HCT116 (cell line): ENCODE measurements at regions of chrX and their contacts with region 1.

Region 1: GRCh38 chrX:112043997-112044396 is 38.6 kb downstream of the TRPC5 start:
- DNase-seq: peak; percentile 12
- ATAC-seq: no peak
- H3K4me3 ChIP-seq: no peak overlapping the region
- H3K27ac ChIP-seq: no peak overlapping the region
- H3K4me1 ChIP-seq: no peaks in the 10 kb centered on the region
- H3K27me3 ChIP-seq: 0 out of 2 replicates have a peak, but pooled peaks cover 3% of the 10 kb centered on the region
- CTCF ChIP-seq: peak in 2 of 3 experiments; percentile 24 to 30; a peak in 4 of 6 replicates
- POLR2A ChIP-seq: no peak
- RAD21 ChIP-seq: peak; percentile 50

Region 2: DNA sequence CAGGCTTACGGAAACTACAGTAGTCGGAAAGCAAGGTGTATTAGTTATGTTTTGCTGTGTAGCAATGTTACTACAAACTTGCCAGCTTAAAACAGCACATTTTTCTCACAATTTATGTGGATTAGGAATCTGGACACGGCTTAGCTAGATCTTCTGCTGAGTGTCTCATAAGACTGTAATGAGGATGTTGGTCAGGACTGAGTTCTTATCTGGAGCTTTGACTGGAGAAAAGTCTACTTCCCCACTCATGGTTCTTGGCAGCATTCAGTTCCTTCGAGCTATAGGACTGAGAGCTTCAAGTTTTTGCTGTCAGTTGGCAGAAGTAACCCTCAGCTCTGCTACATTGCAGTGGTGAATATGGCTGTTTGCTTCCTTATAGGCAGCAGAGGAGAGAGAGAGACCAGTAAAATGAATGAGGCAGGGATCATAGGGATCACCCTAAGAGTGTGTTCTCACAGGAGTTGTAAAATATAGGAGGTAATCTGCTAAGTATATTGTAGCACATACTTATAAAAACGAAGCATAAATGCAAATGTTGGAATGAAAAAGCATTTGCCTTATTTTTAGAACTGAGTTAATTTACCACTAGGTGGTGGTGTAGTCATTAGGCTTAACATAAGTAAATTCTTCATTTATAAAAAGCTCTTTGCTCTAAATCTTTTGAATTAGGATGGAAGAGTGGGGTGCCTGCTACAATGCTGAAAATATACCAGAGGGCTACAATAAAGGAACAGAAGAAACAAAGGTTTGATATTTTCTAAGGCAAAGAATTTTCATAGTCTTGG is 324.4 kb before region 1 on chrX:
- CTCF ChIA-PET with region 1: no interaction called
- POLR2A ChIA-PET with region 1: no interaction called
- RAD21 ChIA-PET with region 1: no interaction called
- intact Hi-C with region 1: loop called (anchors 5 kb)
- DNase-seq: no peak
- ATAC-seq: no peak
- H3K4me3 ChIP-seq: no peak overlapping the region
- H3K27ac ChIP-seq: no peak overlapping the region
- H3K4me1 ChIP-seq: no peaks in the 10 kb centered on the region
- H3K27me3 ChIP-seq: no peaks in the 10 kb centered on the region
- CTCF ChIP-seq: peak in 1 of 3 experiments; percentile 34; a peak in 1 of 6 replicates
- POLR2A ChIP-seq: no peak
- RAD21 ChIP-seq: no peak

Region 3: DNA sequence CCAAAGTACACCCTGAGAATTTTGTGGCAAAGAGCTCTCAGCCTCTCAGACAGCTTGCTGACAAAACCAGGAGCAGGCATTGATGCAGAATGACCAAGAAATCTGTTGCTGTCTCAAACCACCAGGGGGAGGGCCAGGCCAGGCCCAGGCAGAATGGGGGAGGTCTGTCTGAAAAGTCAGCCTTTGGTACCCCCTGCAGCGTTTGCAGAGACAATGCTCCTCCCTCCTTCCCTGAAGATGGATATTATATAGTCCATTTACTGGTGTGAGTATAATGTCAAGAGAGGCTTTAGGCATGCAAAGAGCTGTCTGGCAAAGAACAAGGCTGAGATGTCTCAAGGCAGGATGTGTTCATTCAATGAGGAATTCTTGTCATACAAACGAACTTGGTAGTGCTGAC is 220.9 kb before region 1 on chrX:
- CTCF ChIA-PET with region 1: no interaction called
- POLR2A ChIA-PET with region 1: no interaction called
- RAD21 ChIA-PET with region 1: no interaction called
- intact Hi-C with region 1: loop called (anchors 5 kb)
- DNase-seq: no peak
- ATAC-seq: peak; percentile 68; the same call in 1 of the 2 replicates
- H3K4me3 ChIP-seq: no peak overlapping the region
- H3K27ac ChIP-seq: no peak overlapping the region
- H3K4me1 ChIP-seq: no peaks in the 10 kb centered on the region
- H3K27me3 ChIP-seq: no peaks in the 10 kb centered on the region
- CTCF ChIP-seq: peak; percentile 14 to 55 (median 53); a peak in 5 of 6 replicates
- POLR2A ChIP-seq: no peak
- RAD21 ChIP-seq: peak; percentile 53

Region 4: GRCh38 chrX:111869639-111870034 is 174.4 kb before region 1 on chrX:
- CTCF ChIA-PET with region 1: interaction called, 6 read pairs
- POLR2A ChIA-PET with region 1: no interaction called
- RAD21 ChIA-PET with region 1: no interaction called
- intact Hi-C with region 1: loop called (anchors 2 kb)
- DNase-seq: peak; percentile 16
- ATAC-seq: peak; percentile 88
- H3K4me3 ChIP-seq: no peak overlapping the region
- H3K27ac ChIP-seq: no peak overlapping the region
- H3K4me1 ChIP-seq: no peaks in the 10 kb centered on the region
- H3K27me3 ChIP-seq: no peaks in the 10 kb centered on the region
- CTCF ChIP-seq: peak; percentile 37 to 58 (median 50); a peak in 5 of 6 replicates
- POLR2A ChIP-seq: no peak
- RAD21 ChIP-seq: peak; percentile 63